Panc1 (cell line): ENCODE measurements at regions of chr12 and their contacts with region 1.

Region 1: DNA sequence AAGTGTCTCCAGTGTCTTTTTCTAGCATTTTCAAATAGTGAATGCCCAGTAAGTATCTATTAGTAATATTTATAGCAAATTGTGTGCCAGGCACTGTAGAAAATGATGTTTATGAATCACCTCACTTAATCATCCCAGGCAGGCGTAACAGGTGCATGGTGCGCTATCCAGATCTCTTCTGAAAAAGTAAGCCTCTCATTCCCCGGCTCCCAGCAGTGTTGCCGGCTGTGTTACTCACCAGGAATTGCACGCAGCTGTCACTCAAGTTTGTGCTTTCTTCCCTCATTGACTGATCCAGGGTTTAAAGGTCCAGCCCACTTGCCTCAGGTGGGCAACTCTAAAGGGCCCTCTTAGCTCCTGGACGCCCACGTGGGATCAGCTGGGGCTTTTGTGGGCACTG is 173.8 kb upstream of the RASSF8 start:
- DNase-seq: no peak
- ATAC-seq: no peak
- H3K4me3 ChIP-seq: no peak overlapping the region
- H3K27ac ChIP-seq: no peak overlapping the region
- H3K4me1 ChIP-seq: no peaks in the 10 kb centered on the region
- H3K27me3 ChIP-seq: no peaks in the 10 kb centered on the region; the same call in 1 of the 2 replicates
- CTCF ChIP-seq: no peak

Region 2: DNA sequence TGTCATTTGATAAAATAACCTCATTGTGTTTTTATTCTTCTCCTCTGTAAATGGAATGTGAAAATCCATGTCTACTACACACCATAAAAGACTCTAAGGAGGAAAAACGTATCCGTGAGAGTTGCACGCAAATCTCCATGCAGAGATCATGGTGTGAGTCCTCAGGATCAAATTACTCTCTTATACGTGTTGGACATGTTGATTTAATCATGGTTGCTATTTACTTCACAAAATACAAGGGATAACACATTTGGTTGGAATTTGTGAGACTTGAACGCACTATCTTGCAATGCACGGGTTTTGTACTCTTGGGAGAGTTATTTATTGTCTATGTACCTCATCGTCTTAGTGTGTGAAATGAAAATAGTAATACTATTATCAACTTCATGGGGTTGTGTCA is 45.8 kb after region 1 on chr12:
- CTCF ChIA-PET with region 1: no interaction called
- POLR2A ChIA-PET with region 1: no interaction called
- in situ Hi-C with region 1: no loop called
- intact Hi-C with region 1: loop called (anchors 5 kb)
- DNase-seq: no peak
- ATAC-seq: no peak
- H3K4me3 ChIP-seq: no peak overlapping the region
- H3K27ac ChIP-seq: no peak overlapping the region
- H3K4me1 ChIP-seq: no peaks in the 10 kb centered on the region
- H3K27me3 ChIP-seq: peaks cover 30% of the 10 kb centered on the region; the same call in 1 of the 2 replicates
- CTCF ChIP-seq: no peak